HepG2 (cell line): ENCODE measurements at regions of chr10 and their contacts with region 1.

Region 1: DNA sequence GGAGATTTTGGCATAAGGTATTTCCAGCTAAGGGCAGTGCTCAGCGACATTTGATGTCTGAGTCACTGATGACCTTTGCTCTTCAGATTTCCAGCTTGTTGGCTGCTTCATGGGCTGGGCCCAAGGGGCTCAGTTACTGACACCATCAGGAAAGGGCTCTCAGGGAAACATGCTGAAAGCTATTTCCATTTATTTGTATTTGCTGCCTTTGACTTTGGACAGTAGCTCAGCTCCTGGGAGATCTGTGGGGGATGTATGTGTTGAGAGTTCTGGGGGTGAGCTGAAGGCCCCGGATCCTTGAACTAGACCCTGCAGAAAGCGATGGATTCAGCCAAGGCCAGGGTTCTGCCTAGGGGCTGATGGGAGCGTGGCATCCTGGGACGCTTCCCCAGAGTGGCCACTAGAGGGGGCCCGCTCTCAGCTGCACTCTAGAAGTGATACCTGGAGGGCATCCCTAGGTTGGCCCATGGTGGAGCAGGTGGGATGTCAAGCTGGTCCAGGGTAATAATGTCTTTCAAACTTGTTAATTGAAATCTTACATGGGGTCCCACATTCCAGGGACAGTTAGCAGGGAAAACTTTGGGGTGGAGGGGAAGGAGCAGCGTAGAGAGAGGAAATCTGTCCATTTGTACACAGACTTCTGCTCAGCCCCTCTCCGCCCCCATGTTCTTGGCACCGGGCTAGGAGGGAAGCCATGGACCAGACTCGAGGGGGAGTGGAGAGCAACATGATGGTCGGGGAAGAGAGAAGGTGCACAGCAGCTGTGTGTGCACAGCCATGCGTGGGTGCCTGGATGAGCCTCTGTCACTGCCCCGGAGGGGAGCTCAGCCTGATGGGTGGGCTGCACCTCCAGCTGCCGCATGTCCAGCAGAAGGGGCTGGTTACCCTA is 3.0 kb upstream of the BTBD16 start:
- DNase-seq: peak; percentile 78
- ATAC-seq: peak; percentile 94
- H3K4me3 ChIP-seq: peak overlapping the region in 1 of 3 experiments; percentile 44; a peak in 2 of 6 replicates
- H3K27ac ChIP-seq: peak overlapping the region; percentile 41
- H3K4me1 ChIP-seq: peaks cover 28% of the 10 kb centered on the region
- H3K27me3 ChIP-seq: no peaks in the 10 kb centered on the region
- CTCF ChIP-seq: peak; percentile 92
- EP300 ChIP-seq: no peak
- POLR2A ChIP-seq: no peak
- RAD21 ChIP-seq: peak; percentile 81

Region 2: GRCh38 chr10:122044045-122044661 is 223.9 kb before region 1 on chr10:
- CTCF ChIA-PET with region 1: no interaction called
- POLR2A ChIA-PET with region 1: no interaction called
- in situ Hi-C with region 1: no loop called
- intact Hi-C with region 1: loop called (anchors 10 kb)
- DNase-seq: peak; percentile 76
- ATAC-seq: peak; percentile 75
- H3K4me3 ChIP-seq: peak overlapping the region in 2 of 3 experiments; percentile 13; a peak in 2 of 6 replicates
- H3K27ac ChIP-seq: peak overlapping the region; percentile 62
- H3K4me1 ChIP-seq: peaks cover 85% of the 10 kb centered on the region
- H3K27me3 ChIP-seq: no peaks in the 10 kb centered on the region
- CTCF ChIP-seq: no peak
- EP300 ChIP-seq: no peak
- POLR2A ChIP-seq: no peak
- RAD21 ChIP-seq: no peak

Region 3: GRCh38 chr10:122142641-122143237 is 125.4 kb before region 1 on chr10:
- CTCF ChIA-PET with region 1: no interaction called
- POLR2A ChIA-PET with region 1: no interaction called
- in situ Hi-C with region 1: no loop called
- intact Hi-C with region 1: loop called (anchors 10 kb)
- DNase-seq: no peak
- ATAC-seq: peak; percentile 64
- H3K4me3 ChIP-seq: no peak overlapping the region
- H3K27ac ChIP-seq: no peak overlapping the region
- H3K4me1 ChIP-seq: peaks cover 31% of the 10 kb centered on the region
- H3K27me3 ChIP-seq: no peaks in the 10 kb centered on the region
- CTCF ChIP-seq: peak; percentile 94
- EP300 ChIP-seq: no peak
- POLR2A ChIP-seq: no peak
- RAD21 ChIP-seq: peak; percentile 91